Naive thymus-derived CD4-positive, alpha-beta T cell (primary cell): ENCODE measurements at regions of chr2 and their contacts with region 1.

Region 1: DNA sequence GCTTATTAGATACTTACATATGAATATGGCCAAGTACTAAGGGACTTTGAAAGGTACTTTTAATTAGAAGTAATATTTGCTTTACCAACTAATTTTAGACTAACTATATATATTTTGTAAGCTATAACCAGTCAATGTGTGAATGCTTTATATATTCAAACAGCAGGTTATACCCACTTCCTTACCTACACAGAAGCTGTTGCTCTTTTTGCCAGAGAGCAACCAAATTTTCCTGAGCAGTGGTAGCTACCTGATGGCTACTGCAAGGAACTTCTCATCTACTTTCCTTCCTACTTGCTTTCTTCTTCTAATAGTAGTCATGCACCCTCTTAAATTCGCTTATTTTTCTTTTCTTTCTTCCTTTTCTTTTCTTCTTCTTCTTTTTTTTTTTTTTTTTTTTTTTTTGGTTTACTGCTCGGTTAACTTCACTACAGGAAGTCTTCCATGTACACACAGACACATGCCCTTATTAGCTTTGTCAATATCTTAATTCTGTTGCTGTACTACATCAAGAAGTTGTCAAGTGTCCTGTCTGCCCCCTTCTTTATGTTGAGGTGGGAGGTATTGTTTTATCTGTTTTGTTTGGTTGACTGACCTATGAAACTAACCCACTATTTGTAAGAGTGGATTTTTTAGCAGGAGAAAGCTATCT is 95.0 kb downstream of the EPC2 start:
- DNase-seq: peak in 1 of 9 donors; percentile 18
- ATAC-seq: no peak
- H3K4me3 ChIP-seq: no peak overlapping the region
- H3K4me3 Mint-ChIP-seq: peak overlapping the region in 7 of 10 donors; percentile 28 to 55 (median 46)
- H3K27ac ChIP-seq: no peak overlapping the region
- H3K27ac Mint-ChIP-seq: peak overlapping the region in 2 of 9 donors; percentile 43 to 63
- H3K4me1 ChIP-seq: peaks cover 0 to 20% of the 10 kb centered on the region in 2 donors
- H3K4me1 Mint-ChIP-seq: peaks cover 11 to 86% (median 68%) of the 10 kb centered on the region in 7 donors
- H3K27me3 ChIP-seq: no peaks in the 10 kb centered on the region
- H3K27me3 Mint-ChIP-seq: no peaks in the 10 kb centered on the region

Region 2: GRCh38 chr2:147364597-147364996 is 1375.0 kb before region 1 on chr2:
- CTCF ChIA-PET with region 1: no interaction called
- POLR2A ChIA-PET with region 1: no interaction called
- intact Hi-C with region 1: no loop called
- DNase-seq: peak in 5 of 9 donors; percentile 3 to 22 (median 8)
- ATAC-seq: no peak
- H3K4me3 ChIP-seq: peak overlapping the region; percentile 24
- H3K4me3 Mint-ChIP-seq: peak overlapping the region in 9 of 10 donors; percentile 25 to 73 (median 58)
- H3K27ac ChIP-seq: no peak overlapping the region
- H3K27ac Mint-ChIP-seq: peak overlapping the region in 6 of 9 donors; percentile 2 to 67 (median 28)
- H3K4me1 ChIP-seq: no peaks in the 10 kb centered on the region
- H3K4me1 Mint-ChIP-seq: peaks cover 0 to 12% (median 11%) of the 10 kb centered on the region in 7 donors
- H3K27me3 ChIP-seq: no peaks in the 10 kb centered on the region
- H3K27me3 Mint-ChIP-seq: peaks cover 0 to 11% (median 2%) of the 10 kb centered on the region in 5 donors

Region 3: GRCh38 chr2:148702475-148702874 is 37.1 kb before region 1 on chr2:
- CTCF ChIA-PET with region 1: no interaction called
- POLR2A ChIA-PET with region 1: no interaction called
- intact Hi-C with region 1: no loop called
- DNase-seq: no peak
- ATAC-seq: no peak
- H3K4me3 ChIP-seq: no peak overlapping the region
- H3K4me3 Mint-ChIP-seq: peak overlapping the region in 1 of 10 donors; percentile 2
- H3K27ac ChIP-seq: no peak overlapping the region
- H3K27ac Mint-ChIP-seq: peak overlapping the region in 1 of 9 donors; percentile 32
- H3K4me1 ChIP-seq: no peaks in the 10 kb centered on the region
- H3K4me1 Mint-ChIP-seq: peaks cover 3 to 48% (median 39%) of the 10 kb centered on the region in 7 donors
- H3K27me3 ChIP-seq: no peaks in the 10 kb centered on the region
- H3K27me3 Mint-ChIP-seq: no peaks in the 10 kb centered on the region

Region 4: GRCh38 chr2:148725564-148725963 is 14.0 kb before region 1 on chr2:
- CTCF ChIA-PET with region 1: interaction called, 3 read pairs
- POLR2A ChIA-PET with region 1: interaction called, 3 read pairs
- intact Hi-C with region 1: loop called in 1 of 2 experiments (anchors 2 kb)
- DNase-seq: no peak
- ATAC-seq: no peak
- H3K4me3 ChIP-seq: no peak overlapping the region
- H3K4me3 Mint-ChIP-seq: peak overlapping the region in 4 of 10 donors; percentile 18 to 44 (median 35)
- H3K27ac ChIP-seq: no peak overlapping the region
- H3K27ac Mint-ChIP-seq: peak overlapping the region in 8 of 9 donors; percentile 1 to 54 (median 20)
- H3K4me1 ChIP-seq: peaks cover 7 to 13% of the 10 kb centered on the region in 2 donors
- H3K4me1 Mint-ChIP-seq: peaks cover 46 to 83% (median 67%) of the 10 kb centered on the region in 7 donors
- H3K27me3 ChIP-seq: no peaks in the 10 kb centered on the region
- H3K27me3 Mint-ChIP-seq: no peaks in the 10 kb centered on the region

Region 5: GRCh38 chr2:148754864-148755263 is 15.3 kb after region 1 on chr2:
- CTCF ChIA-PET with region 1: no interaction called
- POLR2A ChIA-PET with region 1: interaction called, 3 read pairs
- intact Hi-C with region 1: loop called in 1 of 2 experiments (anchors 2 kb)
- DNase-seq: no peak
- ATAC-seq: no peak
- H3K4me3 ChIP-seq: no peak overlapping the region
- H3K4me3 Mint-ChIP-seq: no peak overlapping the region
- H3K27ac ChIP-seq: no peak overlapping the region
- H3K27ac Mint-ChIP-seq: no peak overlapping the region
- H3K4me1 ChIP-seq: no peaks in the 10 kb centered on the region
- H3K4me1 Mint-ChIP-seq: peaks cover 13 to 48% (median 32%) of the 10 kb centered on the region in 7 donors
- H3K27me3 ChIP-seq: no peaks in the 10 kb centered on the region
- H3K27me3 Mint-ChIP-seq: no peaks in the 10 kb centered on the region